HCT116 (cell line): ENCODE measurements at regions of chr4 and their contacts with region 1.

Region 1: GRCh38 chr4:138090150-138090917 is 151.8 kb downstream of the SLC7A11 start:
- DNase-seq: peak; percentile 76
- ATAC-seq: peak; percentile 94
- H3K4me3 ChIP-seq: peak overlapping the region; percentile 31 to 51
- H3K27ac ChIP-seq: no peak overlapping the region
- H3K4me1 ChIP-seq: peaks cover 0 to 13% of the 10 kb centered on the region in 2 experiments; a peak in 2 of 4 replicates
- H3K27me3 ChIP-seq: no peaks in the 10 kb centered on the region
- CTCF ChIP-seq: peak; percentile 66 to 83 (median 78)
- POLR2A ChIP-seq: no peak
- RAD21 ChIP-seq: peak; percentile 91

Region 2: DNA sequence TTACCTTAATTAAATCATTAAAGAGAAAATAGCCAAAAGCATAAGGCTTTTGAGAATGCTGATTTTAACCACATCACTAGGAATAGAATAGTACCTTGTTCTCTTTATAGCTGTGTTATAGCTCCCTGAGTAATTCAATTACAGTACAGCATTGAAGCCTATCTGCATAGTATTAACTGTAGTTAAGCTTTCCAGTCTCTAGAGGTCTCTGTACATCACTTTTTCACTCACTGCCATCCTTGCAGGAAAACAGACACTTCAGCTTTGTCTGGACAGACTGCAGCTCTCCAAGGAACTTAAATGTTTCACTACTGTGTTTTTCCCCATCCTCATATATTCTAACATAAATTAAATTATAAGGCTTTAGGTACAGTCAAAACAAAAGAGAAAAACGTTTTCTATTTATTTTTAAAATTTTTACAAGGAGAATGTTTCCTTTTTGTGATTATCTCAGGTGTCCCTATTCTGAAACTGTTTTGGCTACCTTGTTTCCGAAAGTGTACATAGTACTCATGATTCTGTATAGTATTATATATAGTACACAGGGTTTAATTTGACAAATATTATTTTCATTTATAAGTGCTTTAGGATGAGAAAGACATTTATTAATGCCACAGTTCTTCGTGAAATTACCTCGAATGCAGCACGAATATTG is 965.9 kb before region 1 on chr4:
- CTCF ChIA-PET with region 1: interaction called, 12 read pairs
- POLR2A ChIA-PET with region 1: interaction called, 5 read pairs
- RAD21 ChIA-PET with region 1: no interaction called
- intact Hi-C with region 1: no loop called
- DNase-seq: peak; percentile 53
- ATAC-seq: peak; percentile 97
- H3K4me3 ChIP-seq: peak overlapping the region; percentile 40 to 51
- H3K27ac ChIP-seq: no peak overlapping the region
- H3K4me1 ChIP-seq: no peaks in the 10 kb centered on the region
- H3K27me3 ChIP-seq: no peaks in the 10 kb centered on the region
- CTCF ChIP-seq: peak; percentile 40 to 63 (median 47)
- POLR2A ChIP-seq: no peak
- RAD21 ChIP-seq: peak; percentile 77

Region 3: GRCh38 chr4:137819964-137820383 is 270.4 kb before region 1 on chr4:
- CTCF ChIA-PET with region 1: interaction called, 25 read pairs
- POLR2A ChIA-PET with region 1: no interaction called
- RAD21 ChIA-PET with region 1: interaction called, 5 read pairs
- intact Hi-C with region 1: loop called (anchors 1 kb)
- DNase-seq: peak; percentile 50
- ATAC-seq: peak; percentile 99
- H3K4me3 ChIP-seq: no peak overlapping the region
- H3K27ac ChIP-seq: no peak overlapping the region
- H3K4me1 ChIP-seq: no peaks in the 10 kb centered on the region
- H3K27me3 ChIP-seq: no peaks in the 10 kb centered on the region
- CTCF ChIP-seq: peak; percentile 67 to 78 (median 72)
- POLR2A ChIP-seq: no peak
- RAD21 ChIP-seq: peak; percentile 92

Region 4: GRCh38 chr4:138182838-138183426 is 92.6 kb after region 1 on chr4:
- CTCF ChIA-PET with region 1: interaction called, 10 read pairs
- POLR2A ChIA-PET with region 1: no interaction called
- RAD21 ChIA-PET with region 1: no interaction called
- intact Hi-C with region 1: no loop called
- DNase-seq: peak; percentile 45
- ATAC-seq: no peak
- H3K4me3 ChIP-seq: no peak overlapping the region
- H3K27ac ChIP-seq: no peak overlapping the region
- H3K4me1 ChIP-seq: no peaks in the 10 kb centered on the region
- H3K27me3 ChIP-seq: no peaks in the 10 kb centered on the region
- CTCF ChIP-seq: peak; percentile 45 to 81 (median 59)
- POLR2A ChIP-seq: no peak
- RAD21 ChIP-seq: peak; percentile 73

Region 5: DNA sequence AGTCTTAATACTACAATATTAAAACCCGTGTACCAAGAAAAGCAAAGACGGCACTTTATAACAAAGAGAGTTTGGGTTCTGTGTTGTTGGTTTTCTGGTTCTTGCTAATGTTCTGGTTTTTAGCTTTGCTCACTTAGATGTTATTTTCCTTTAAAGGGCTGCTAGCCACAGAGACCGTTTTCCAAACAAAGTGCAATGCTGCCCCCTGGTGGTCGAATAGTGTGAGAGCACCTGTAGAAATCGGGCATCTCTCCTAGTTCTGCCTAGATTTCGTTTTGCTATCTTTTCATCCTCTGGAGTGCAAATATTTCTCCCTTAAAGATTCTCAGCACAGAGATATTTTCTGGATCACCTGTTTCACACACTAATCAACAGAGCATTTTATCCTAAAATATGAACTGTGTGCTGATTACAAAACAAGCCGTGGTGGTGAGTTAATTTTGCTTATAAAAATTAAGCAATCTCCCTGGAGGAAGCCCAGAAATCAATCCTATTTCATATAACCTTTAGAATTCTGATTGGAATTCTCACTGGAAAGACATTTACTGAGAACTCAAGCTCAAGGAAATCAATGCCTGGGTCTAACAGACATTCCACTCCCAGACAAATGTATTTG is 590.8 kb after region 1 on chr4:
- CTCF ChIA-PET with region 1: interaction called, 10 read pairs
- POLR2A ChIA-PET with region 1: no interaction called
- RAD21 ChIA-PET with region 1: no interaction called
- intact Hi-C with region 1: loop called (anchors 2 kb)
- DNase-seq: peak; percentile 57
- ATAC-seq: peak; percentile 84
- H3K4me3 ChIP-seq: no peak overlapping the region
- H3K27ac ChIP-seq: no peak overlapping the region
- H3K4me1 ChIP-seq: no peaks in the 10 kb centered on the region
- H3K27me3 ChIP-seq: no peaks in the 10 kb centered on the region
- CTCF ChIP-seq: peak; percentile 72 to 96 (median 74); a peak in 5 of 6 replicates
- POLR2A ChIP-seq: no peak
- RAD21 ChIP-seq: peak; percentile 91